HEK293 (cell line): ENCODE measurements at regions of chr3 and their contacts with region 1.

Region 1: DNA sequence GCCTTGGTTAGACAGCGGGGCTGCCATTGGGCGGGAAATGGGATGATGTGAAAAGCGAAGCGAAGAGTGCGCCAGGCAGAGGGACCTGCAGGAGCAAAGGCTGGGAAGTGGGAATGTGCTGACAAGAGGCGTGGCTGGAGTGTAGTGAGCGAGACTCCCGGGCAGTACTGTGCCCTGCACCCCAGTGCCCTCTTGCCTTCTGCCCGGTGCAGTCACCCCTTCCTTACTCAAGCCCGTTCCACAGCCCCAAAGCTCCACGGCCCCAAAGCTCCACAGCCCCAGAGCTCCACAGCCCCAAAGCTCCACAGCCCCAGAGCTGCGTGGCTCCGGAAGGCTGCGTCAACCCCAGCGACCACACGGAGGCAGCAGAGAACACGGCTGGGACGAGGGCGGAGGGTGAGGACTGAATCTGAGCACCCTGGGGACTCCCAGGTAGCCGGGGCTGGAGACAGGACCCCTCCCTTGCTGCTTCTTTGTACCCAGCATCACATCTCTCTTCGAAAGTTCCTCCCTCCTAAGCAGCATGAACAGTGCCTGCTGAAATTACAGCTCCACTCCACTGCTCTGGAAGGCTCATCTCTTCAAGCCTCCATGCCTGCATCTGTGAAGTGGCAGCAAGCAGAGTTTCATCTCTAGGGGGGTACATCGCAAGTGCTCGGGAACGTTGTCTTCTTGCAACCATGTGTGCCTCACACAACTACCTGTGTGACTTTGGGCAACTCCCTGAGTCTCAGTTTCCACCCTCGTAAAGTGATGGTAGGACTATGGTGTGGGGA is 108.9 kb downstream of the FBLN2 start:
- H3K4me3 ChIP-seq: no peak overlapping the region
- H3K27ac ChIP-seq: no peak overlapping the region
- H3K4me1 ChIP-seq: no peaks in the 10 kb centered on the region
- CTCF ChIP-seq: peak; percentile 89

Region 2: DNA sequence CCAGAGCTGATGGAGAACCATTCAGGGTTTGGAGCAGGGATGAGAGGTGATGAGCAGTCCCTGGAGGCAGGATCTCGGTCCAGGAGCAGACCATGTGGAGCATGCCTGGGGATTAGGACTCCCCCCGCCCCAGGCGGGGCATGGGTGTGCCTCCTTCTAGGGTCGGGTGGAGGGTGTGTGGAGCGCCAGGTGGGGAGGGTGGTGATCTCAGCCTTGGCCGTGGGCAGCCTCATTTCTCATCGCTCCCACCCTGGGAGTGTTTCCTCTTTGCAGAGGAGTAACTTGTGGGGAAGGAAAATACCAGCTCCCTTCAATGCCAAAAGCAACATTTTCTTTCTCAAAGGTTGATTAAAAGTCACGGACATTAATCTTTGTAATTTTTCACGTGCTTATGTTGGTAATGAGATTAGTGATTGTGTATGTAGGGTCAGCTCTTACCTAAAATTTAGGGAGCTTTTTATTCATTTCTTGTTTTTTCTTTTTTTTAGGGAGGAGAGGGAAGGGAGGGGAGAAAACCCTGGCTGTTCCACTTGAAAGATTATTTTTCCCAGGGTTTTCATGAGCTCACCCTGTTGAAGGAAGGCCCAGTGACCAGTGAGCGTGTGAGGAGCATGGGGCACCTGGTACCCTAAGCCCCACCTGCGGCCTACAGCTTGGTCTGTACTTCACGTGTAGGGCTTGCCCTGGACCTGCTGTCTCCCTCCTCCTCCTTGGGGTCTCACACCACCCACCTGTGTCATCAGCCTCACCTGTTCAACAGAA is 97.9 kb before region 1 on chr3:
- CTCF ChIA-PET with region 1: no interaction called
- POLR2A ChIA-PET with region 1: no interaction called
- H3K4me3 ChIP-seq: no peak overlapping the region
- H3K27ac ChIP-seq: no peak overlapping the region
- H3K4me1 ChIP-seq: no peaks in the 10 kb centered on the region
- CTCF ChIP-seq: no peak

Region 3: GRCh38 chr3:13673209-13673608 is 15.4 kb after region 1 on chr3:
- CTCF ChIA-PET with region 1: interaction called, 12 read pairs
- POLR2A ChIA-PET with region 1: no interaction called
- H3K4me3 ChIP-seq: no peak overlapping the region
- H3K27ac ChIP-seq: no peak overlapping the region
- H3K4me1 ChIP-seq: no peaks in the 10 kb centered on the region
- CTCF ChIP-seq: 0 out of 2 replicates have a peak, but pooled peaks have one; percentile 14

Region 4: DNA sequence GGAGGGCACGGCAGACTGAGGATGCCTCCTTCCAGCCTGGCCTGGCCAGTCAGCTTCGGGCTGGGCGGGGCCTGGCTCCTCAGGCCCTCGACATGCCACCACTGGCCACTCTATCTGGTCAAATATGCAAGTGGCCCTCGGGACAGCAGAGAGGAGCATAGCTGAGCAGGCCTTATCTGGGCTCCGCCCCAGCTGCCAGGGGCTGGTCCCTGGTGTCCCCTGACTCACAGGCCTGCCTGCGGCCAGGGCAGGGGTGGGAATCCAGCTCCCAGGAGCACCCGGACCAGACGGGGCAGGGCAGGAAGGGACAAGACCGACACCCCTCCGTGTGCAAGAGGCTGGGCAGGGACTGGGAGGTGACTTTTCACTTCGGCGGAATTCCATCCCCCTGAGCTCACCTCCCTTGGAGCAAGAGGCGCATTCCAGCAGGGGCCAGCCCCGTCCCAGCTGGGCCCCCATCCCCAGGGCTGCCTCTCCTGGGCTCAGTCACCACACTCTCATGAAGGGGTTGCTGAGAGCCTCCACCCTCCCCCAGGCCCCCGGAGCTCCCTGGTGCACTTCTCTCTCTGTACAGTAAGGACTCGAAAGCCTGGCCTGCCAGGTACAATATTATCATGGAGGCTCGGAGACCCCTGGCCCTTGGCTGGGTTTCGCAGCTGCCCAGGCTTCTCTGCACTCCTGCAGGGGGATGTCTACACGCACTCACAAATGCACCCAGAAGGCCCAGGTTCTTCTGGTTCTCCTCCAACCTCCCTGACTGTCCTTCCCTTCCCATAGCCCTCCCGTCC is 192.5 kb after region 1 on chr3:
- CTCF ChIA-PET with region 1: interaction called, 11 read pairs
- POLR2A ChIA-PET with region 1: no interaction called
- H3K4me3 ChIP-seq: no peak overlapping the region
- H3K27ac ChIP-seq: no peak overlapping the region
- H3K4me1 ChIP-seq: no peaks in the 10 kb centered on the region
- CTCF ChIP-seq: no peak

Region 5: DNA sequence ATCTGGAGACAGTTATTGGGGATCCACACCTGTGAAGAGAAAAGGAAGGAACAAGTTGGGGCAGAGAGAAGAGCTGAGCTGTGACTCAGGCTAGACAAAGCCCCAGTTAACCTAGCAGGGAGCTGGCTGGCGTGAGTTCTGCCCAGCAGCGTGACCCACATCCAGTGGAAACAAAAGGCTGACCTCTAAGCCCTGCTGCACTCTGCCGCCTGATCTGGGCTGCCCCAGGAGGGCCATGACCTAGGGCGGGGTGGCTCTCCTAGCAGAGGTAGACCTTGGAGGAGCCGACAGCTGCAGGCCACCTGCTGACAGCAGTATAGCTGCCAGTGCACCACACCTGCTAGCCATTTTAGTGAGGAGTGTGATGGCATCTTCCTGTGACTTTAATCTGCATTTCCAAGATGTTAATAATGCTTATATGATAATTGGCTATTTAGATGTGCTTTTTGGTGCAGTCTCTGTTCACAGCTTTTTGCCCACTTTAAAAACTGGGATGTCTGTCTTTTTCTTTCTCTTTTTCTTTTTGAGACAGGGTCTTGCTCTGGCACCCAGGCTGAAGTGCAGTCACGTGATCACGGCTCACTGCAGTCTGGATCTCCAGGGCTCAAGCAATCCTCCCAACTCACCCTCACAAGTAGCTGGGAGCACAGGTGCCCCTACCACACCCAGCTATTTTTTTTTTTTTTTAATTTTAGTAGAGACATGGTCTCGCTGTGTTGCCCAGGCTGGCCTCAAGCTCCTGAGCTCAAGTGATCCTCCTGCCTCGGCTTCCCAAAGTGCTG is 598.9 kb after region 1 on chr3:
- CTCF ChIA-PET with region 1: no interaction called
- POLR2A ChIA-PET with region 1: no interaction called
- H3K4me3 ChIP-seq: no peak overlapping the region
- H3K27ac ChIP-seq: no peak overlapping the region
- H3K4me1 ChIP-seq: no peaks in the 10 kb centered on the region
- CTCF ChIP-seq: no peak